ENCODE measurements at regions of chr3 and their contacts with region 1.

Region 1: GRCh38 chr3:64595253-64595694 is 92.5 kb downstream of the ADAMTS9 start:
- DNase-seq: no peak
- H3K4me3 ChIP-seq: no peak overlapping the region
- H3K27ac ChIP-seq: no peak overlapping the region
- H3K4me1 ChIP-seq: no peaks in the 10 kb centered on the region
- H3K27me3 ChIP-seq: no peaks in the 10 kb centered on the region
- CTCF ChIP-seq: no peak
- POLR2A ChIP-seq: no peak

Region 2: GRCh38 chr3:63218133-63218532 is 1377.1 kb before region 1 on chr3:
- intact Hi-C with region 1: no loop called
- DNase-seq: no peak
- H3K4me3 ChIP-seq: no peak overlapping the region
- H3K27ac ChIP-seq: no peak overlapping the region
- H3K4me1 ChIP-seq: no peaks in the 10 kb centered on the region
- H3K27me3 ChIP-seq: no peaks in the 10 kb centered on the region
- CTCF ChIP-seq: no peak
- POLR2A ChIP-seq: no peak

Region 3: DNA sequence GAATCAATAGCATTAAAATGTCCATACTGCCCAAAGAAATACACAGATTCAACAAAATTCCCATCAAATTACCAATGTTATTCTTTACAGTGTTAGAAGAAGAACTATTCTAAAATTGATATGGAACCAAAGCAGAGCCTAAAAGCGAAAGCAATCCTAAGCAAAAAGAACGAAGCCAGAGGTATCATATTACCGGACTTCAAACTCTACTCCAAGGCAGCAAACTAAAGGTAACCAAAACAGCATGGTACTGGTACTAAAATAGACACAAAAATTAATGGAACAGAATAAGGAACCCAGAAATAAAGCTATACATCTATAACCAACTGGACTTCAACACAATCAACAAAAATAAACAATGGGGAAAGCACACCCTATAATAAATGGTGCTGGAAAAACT is 74.9 kb before region 1 on chr3:
- intact Hi-C with region 1: no loop called
- DNase-seq: no peak
- H3K4me3 ChIP-seq: no peak overlapping the region
- H3K27ac ChIP-seq: no peak overlapping the region
- H3K4me1 ChIP-seq: no peaks in the 10 kb centered on the region
- H3K27me3 ChIP-seq: no peaks in the 10 kb centered on the region
- CTCF ChIP-seq: no peak
- POLR2A ChIP-seq: no peak

Region 4: GRCh38 chr3:64631951-64632350 is 36.7 kb after region 1 on chr3:
- intact Hi-C with region 1: loop called (anchors 2 kb)
- DNase-seq: no peak
- H3K4me3 ChIP-seq: no peak overlapping the region
- H3K27ac ChIP-seq: no peak overlapping the region
- H3K4me1 ChIP-seq: no peaks in the 10 kb centered on the region
- H3K27me3 ChIP-seq: no peaks in the 10 kb centered on the region
- CTCF ChIP-seq: no peak
- POLR2A ChIP-seq: no peak

Region 5: DNA sequence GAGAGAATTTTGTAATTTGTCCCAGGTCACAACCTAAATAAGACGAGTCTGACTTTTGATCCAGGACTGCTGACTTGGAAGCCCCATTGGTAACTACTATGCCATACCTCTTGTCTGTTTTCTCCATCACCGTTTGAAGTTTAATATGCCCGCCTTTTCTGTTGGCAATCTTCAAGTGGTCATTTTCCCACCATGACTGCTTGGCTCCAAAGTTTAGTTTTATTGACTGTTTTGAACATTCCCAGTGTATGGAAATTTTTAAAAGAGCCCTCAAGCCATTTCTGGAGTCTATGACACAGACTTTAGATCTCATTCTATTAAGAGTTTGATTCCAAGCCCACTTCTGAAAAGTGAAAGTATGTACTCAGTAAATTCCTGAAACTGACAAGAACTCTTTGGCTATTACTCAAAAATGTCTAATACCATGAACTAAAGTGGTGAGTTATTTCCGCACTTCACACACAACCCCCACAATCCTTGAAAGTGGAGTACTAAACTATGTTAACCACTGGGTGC is 229.2 kb after region 1 on chr3:
- intact Hi-C with region 1: no loop called
- DNase-seq: no peak
- H3K4me3 ChIP-seq: no peak overlapping the region
- H3K27ac ChIP-seq: no peak overlapping the region
- H3K4me1 ChIP-seq: no peaks in the 10 kb centered on the region
- H3K27me3 ChIP-seq: no peaks in the 10 kb centered on the region
- CTCF ChIP-seq: no peak
- POLR2A ChIP-seq: no peak

Measured in breast epithelium (tissue), 4 donors.